Motor neuron (in vitro differentiated cells): ENCODE measurements at regions of chr16 and their contacts with region 1.

Region 1: DNA sequence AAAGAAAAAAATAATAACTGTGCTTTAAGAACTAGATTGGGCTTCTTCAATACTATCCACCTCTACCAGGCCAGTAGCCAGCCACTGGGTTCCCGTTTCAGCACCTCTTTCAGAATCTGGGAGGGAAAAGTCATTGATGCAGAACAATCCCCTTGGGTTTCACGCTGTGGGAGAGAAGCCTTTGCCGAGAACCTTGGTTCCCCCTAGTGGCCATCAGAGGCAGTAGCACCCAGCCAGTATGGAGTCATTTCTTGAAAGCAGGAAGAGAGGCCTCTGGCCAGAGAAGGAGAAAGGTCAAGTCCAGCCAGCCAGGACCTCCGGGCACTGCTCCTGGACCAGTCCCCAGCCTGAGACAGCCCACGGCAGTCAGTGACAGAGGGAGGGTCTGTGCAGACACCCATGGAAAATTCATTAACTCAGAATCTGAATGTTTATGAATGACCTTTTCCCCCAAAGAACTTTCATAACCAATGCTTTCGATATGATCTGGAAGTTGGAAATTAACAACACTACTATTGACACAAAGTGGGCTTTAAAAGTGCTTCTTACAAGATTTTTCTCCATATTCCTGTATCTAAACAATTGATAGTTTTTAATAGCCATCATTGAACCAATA is 51.2 kb upstream of the CDH5 start:
- ATAC-seq: peak; percentile 85 to 98 (median 92)
- H3K4me3 ChIP-seq: no peak overlapping the region
- H3K27ac ChIP-seq: no peak overlapping the region
- H3K4me1 ChIP-seq: no peaks in the 10 kb centered on the region

Region 2: GRCh38 chr16:66275775-66276428 is 39.4 kb before region 1 on chr16:
- in situ Hi-C with region 1: loop called in 1 of 9 experiments (anchors 5 kb)
- ATAC-seq: peak in 2 of 8 experiments; percentile 7 to 53
- H3K4me3 ChIP-seq: no peak overlapping the region
- H3K27ac ChIP-seq: no peak overlapping the region
- H3K4me1 ChIP-seq: peaks cover 6% of the 10 kb centered on the region in 2 donors